ENCODE measurements at regions of chr1 and their contacts with region 1.

Region 1: DNA sequence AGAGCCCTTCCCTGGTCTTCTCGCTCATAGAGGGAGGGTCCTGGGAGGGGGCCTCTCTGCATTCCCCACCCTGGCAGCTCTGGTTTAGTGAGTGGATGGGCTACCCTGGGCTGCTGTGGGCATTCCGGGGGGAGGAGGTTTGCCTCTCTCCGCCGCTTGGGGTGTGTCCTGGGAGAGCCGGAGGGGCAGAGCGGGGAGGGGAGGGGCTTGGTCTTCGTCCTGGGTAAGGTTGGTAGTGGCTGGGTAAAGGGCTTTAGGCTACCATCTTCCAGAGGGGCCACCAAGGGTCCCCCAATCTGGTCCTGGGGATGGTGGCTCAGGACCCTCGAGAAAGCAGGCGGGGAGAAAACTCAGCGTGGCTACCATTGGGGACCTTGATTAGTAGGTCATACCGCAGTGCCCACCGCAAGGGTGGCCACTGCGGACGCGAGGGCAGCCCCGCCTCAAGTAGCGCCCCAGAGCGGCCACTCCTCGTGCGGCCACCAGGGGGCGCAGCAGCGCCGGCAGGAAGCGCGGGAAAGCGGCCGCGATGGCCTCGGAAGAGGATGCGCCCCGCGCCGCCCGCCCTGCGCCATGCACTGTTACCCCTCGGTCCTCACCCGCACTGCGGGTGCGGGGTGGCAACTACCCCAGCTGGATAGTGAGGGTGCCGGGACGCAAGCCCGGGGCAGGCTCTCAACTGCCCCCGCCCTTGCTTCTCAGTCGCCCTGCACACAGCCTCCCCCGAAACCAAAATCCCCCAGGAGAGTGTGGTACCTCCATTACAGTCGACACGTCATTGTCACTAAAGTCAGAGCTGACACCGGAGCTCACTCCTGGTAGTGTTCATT is 44.1 kb upstream of the SLC25A33 start:
- DNase-seq: no peak
- ATAC-seq: peak; percentile 42 to 73
- H3K4me3 ChIP-seq: peak overlapping the region in 3 of 4 donors; percentile 40 to 48 (median 42)
- H3K27ac ChIP-seq: no peak overlapping the region
- H3K4me1 ChIP-seq: peaks cover 0 to 6% of the 10 kb centered on the region in 2 donors
- H3K27me3 ChIP-seq: no peaks in the 10 kb centered on the region
- CTCF ChIP-seq: peak; percentile 94 to 99 (median 99)
- POLR2A ChIP-seq: no peak

Region 2: DNA sequence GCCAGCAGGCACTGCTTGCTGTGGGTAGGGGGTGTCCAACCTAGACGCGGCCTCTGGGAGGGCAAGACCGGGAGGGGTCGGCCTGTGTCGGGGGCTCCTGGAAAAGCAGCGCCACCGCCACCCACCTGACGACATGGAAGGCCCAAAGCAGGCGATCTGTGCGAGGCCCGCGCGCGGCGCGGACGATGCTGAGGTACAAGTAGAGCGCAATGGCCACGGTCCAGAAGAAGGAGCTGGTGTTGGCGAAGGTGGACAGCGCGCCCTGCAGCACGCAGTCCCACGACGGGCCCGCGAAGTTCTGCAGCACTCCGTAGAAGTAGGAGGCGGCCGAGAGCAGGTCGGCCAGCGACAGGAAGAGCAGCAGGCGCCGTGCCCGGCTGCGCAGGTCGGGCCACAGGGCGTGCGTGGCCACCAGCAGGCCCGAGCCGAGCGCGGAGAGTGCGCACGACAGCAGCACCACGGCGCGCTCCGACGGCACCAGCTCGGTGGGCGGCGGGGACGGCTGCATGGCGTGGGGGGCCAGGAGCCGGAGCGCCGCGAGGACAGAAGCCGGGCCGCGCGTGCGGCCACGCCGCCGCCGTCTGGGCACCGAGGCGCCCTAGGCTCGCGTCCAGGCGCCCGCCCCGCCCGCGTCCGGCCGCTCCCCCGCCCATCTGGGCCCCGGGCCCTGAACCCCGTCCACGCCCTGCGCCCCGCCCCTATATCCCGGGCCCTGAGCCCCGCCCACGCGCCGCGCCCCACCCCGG is 366.5 kb before region 1 on chr1 and contains the start of gene GPR157:
- in situ Hi-C with region 1: loop called in 1 of 4 experiments (anchors 25 kb)
- intact Hi-C with region 1: loop called (anchors 5 kb)
- DNase-seq: peak; percentile 86 to 87
- ATAC-seq: peak; percentile 53 to 65
- H3K4me3 ChIP-seq: peak within 1 kb of the TSS; percentile 72 to 97 (median 82)
- H3K27ac ChIP-seq: peak within 1 kb of the TSS; percentile 94 to 99 (median 98)
- H3K4me1 ChIP-seq: peaks cover 26 to 39% of the 10 kb centered on the region in 2 donors
- H3K27me3 ChIP-seq: no peaks in the 10 kb centered on the region
- CTCF ChIP-seq: peak in 4 of 5 experiments; percentile 22 to 43 (median 37)
- POLR2A ChIP-seq: peak; percentile 96 to 97
- total RNA-seq, gene GPR157: 12.9 to 38.1 (median 18.9) TPM

Region 3: DNA sequence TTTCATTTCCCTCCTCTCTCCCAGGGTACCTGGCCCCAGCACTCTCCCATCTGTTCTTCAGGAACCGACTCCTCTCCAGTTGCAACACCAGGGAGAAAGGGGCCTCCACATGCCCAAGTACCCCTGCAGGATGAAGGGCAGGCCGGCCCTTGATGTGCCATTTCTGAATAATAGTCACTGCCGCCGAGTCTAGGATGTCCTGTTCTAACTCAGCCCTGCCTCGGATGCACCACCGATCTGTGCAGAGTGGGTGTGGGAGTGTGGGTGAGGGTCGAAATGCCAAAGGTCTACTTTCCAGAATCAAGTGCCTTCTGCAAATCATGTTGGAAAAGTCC is 227.8 kb before region 1 on chr1:
- in situ Hi-C with region 1: no loop called
- intact Hi-C with region 1: loop called (anchors 1 kb)
- DNase-seq: no peak
- ATAC-seq: no peak
- H3K4me3 ChIP-seq: no peak overlapping the region
- H3K27ac ChIP-seq: peak overlapping the region; percentile 7 to 64 (median 46)
- H3K4me1 ChIP-seq: peaks cover 42 to 52% of the 10 kb centered on the region in 2 donors
- H3K27me3 ChIP-seq: no peaks in the 10 kb centered on the region
- CTCF ChIP-seq: peak in 3 of 5 experiments; percentile 3 to 9 (median 5)
- POLR2A ChIP-seq: no peak

Region 4: DNA sequence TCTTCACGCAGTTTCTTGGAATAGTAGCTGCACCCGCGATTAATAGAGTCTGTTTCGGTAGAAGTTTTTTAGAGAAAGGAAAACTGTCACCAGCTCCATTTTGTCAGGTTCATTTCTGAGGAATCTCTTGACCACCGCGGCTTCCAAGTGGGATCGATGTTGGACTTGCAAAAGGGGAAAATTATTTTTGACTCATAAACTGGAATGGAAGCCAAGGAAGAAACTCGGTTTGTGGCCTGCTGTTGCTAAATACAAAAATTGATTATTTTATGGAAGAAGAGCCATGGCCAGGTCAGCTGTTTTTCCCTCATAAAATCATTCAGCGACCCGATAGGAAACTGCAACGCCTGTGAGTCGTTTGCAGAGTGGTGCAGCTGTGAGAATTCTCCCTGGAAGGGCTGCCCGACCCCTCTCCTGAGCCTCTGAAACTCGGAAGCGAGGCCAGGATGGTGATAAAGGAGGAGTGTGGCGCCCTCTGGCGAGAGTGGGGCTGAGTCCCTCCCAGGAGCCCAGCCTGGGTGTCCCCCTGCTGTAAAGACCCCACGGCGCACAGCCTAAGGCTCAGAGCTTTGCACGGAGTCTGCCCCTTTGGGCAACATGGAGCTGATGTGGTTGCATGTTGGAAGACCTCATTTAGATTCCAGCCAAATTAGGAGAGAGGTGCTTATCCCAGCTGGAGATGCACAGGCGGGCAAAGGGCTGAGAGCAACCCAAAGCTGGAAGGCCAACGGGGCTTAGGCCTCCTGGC is 39.5 kb before region 1 on chr1:
- in situ Hi-C with region 1: no loop called
- intact Hi-C with region 1: loop called (anchors 5 kb)
- DNase-seq: peak in 1 of 2 donors; percentile 63
- ATAC-seq: peak; percentile 50 to 67
- H3K4me3 ChIP-seq: peak overlapping the region in 1 of 4 donors; percentile 15
- H3K27ac ChIP-seq: peak overlapping the region in 3 of 4 donors; percentile 15 to 32 (median 27)
- H3K4me1 ChIP-seq: peaks cover 13 to 16% of the 10 kb centered on the region in 2 donors
- H3K27me3 ChIP-seq: no peaks in the 10 kb centered on the region
- CTCF ChIP-seq: peak; percentile 78 to 94 (median 89)
- POLR2A ChIP-seq: no peak

Region 5: DNA sequence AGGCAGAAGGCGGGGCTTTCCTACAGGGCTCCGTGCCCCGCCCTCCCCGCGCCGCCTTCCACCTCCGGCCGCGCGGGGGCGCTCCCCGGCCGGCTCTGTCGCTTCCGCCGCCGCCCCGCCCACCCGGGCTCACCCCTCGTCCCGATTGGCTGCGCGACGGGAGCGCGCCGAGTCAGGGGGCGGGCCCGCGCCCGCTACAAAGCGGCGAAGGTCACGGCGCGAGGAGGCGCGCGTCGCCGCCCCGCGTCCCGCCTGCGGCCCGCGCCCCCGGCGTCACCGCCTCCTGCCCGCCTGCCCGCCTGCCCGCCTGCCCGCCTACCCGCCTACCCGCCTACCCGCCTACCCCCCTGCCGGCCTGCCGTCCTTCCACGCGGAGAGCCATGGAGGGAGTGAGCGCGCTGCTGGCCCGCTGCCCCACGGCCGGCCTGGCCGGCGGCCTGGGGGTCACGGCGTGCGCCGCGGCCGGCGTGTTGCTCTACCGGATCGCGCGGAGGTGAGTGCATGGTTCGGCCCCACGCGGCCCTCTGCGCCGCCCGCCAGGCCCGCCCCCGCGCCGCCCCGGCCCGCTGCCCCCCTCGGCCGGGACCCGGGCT is 93.5 kb after region 1 on chr1 and contains the start of gene TMEM201:
- in situ Hi-C with region 1: no loop called
- intact Hi-C with region 1: loop called (anchors 5 kb)
- DNase-seq: peak; percentile 83 to 93
- ATAC-seq: peak; percentile 62 to 73
- H3K4me3 ChIP-seq: peak within 1 kb of the TSS; percentile 53 to 86 (median 59)
- H3K27ac ChIP-seq: peak within 1 kb of the TSS; percentile 77 to 84 (median 82)
- H3K4me1 ChIP-seq: peaks cover 46 to 47% of the 10 kb centered on the region in 2 donors
- H3K27me3 ChIP-seq: no peaks in the 10 kb centered on the region
- CTCF ChIP-seq: peak; percentile 69 to 96 (median 88)
- POLR2A ChIP-seq: peak; percentile 87 to 92
- total RNA-seq, gene TMEM201: 21.5 to 67.6 (median 31.7) TPM

Region 6: DNA sequence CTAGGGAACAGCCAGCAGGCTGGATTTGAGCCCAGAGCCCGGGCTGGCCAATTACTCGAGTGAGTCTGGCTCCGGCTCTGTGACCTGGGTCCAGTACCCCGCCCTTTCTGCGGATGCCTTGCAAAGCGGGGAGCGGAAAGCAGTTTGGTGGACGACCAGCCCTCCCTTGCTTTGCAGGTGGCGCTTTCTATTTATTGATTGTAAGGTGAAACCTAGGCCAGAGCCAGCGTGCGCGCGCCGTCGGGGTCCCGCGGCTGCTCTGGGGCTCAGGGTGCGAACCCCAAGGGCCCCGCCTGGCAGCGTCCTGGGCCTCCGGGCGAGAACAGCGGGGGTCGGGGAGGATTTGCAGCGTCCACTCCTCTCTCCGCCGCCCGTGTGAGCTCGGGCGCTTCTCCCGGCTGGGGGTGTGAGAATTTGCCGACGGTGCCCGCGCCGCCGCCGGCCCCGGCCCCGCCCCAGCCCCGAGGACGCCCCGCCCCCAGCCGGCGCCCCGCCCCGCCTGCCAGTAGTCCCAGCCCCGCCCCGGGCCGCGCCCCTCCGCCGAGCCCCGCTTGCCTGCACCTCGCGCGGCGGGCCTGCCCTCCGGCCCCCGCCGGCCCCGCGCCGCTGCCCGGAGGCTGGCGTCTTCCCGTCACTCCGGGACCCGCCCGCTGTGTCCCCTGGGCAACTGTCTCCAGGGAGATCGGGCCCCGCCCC is 194.0 kb after region 1 on chr1:
- in situ Hi-C with region 1: no loop called
- intact Hi-C with region 1: no loop called
- DNase-seq: peak; percentile 46 to 49
- ATAC-seq: peak; percentile 80 to 84
- H3K4me3 ChIP-seq: peak overlapping the region; percentile 46 to 89 (median 65)
- H3K27ac ChIP-seq: no peak overlapping the region
- H3K4me1 ChIP-seq: peaks cover 18 to 20% of the 10 kb centered on the region in 2 donors
- H3K27me3 ChIP-seq: peaks cover 21 to 24% (median 21%) of the 10 kb centered on the region in 3 donors
- CTCF ChIP-seq: no peak
- POLR2A ChIP-seq: no peak

Measured in gastrocnemius medialis (tissue), 4 donors.